Activated CD4-positive, alpha-beta T cell treated with anti-CD3 and anti-CD28 coated beads, Interleukin-2, amount 10 ng/mL, durations not matched to agents 24 days and 14 days (primary cell): ENCODE measurements at regions of chr13 and their contacts with region 1.

Region 1: GRCh38 chr13:44435142-44435982 is 61.7 kb downstream of the SERP2 start:
- DNase-seq: peak; percentile 91
- H3K4me3 Mint-ChIP-seq: peak overlapping the region; percentile 76
- H3K27ac Mint-ChIP-seq: peak overlapping the region; percentile 30
- H3K4me1 Mint-ChIP-seq: peaks cover 17% of the 10 kb centered on the region
- H3K27me3 Mint-ChIP-seq: peaks cover 61% of the 10 kb centered on the region

Region 2: GRCh38 chr13:43905435-43906031 is 529.8 kb before region 1 on chr13:
- intact Hi-C with region 1: loop called (anchors 1 kb)
- DNase-seq: peak; percentile 80
- H3K4me3 Mint-ChIP-seq: no peak overlapping the region
- H3K27ac Mint-ChIP-seq: no peak overlapping the region
- H3K4me1 Mint-ChIP-seq: no peaks in the 10 kb centered on the region
- H3K27me3 Mint-ChIP-seq: peaks cover 36% of the 10 kb centered on the region

Region 3: DNA sequence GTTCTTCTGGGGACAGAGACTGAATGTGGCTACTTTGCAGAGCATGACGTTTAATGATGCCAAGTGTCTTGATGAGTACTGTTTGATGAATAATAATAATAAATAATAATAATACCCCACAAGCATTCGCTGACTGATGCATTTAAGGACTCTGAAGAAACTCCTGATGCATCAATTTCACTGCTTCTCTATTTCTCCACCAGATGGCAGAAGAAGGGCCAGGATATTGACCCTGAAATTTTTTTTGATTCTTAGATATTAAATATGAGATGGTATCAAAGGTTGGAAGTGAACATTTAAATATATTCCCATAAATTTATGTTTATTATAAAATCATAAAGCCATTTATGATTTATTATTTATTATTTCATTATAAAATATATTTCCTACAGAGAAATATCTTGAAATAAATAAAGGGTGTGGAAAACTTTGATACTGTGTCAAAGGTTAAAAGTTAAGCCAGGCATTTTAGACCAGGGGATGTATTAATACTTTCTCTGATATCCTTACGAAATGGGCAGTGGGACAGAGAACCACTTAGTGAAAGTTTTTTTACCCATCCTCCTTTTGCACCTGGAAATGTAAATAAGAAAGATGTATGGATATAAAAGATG is 384.8 kb before region 1 on chr13:
- intact Hi-C with region 1: loop called (anchors 1 kb)
- DNase-seq: no peak
- H3K4me3 Mint-ChIP-seq: no peak overlapping the region
- H3K27ac Mint-ChIP-seq: no peak overlapping the region
- H3K4me1 Mint-ChIP-seq: peaks cover 3% of the 10 kb centered on the region
- H3K27me3 Mint-ChIP-seq: peaks cover 36% of the 10 kb centered on the region

Region 4: DNA sequence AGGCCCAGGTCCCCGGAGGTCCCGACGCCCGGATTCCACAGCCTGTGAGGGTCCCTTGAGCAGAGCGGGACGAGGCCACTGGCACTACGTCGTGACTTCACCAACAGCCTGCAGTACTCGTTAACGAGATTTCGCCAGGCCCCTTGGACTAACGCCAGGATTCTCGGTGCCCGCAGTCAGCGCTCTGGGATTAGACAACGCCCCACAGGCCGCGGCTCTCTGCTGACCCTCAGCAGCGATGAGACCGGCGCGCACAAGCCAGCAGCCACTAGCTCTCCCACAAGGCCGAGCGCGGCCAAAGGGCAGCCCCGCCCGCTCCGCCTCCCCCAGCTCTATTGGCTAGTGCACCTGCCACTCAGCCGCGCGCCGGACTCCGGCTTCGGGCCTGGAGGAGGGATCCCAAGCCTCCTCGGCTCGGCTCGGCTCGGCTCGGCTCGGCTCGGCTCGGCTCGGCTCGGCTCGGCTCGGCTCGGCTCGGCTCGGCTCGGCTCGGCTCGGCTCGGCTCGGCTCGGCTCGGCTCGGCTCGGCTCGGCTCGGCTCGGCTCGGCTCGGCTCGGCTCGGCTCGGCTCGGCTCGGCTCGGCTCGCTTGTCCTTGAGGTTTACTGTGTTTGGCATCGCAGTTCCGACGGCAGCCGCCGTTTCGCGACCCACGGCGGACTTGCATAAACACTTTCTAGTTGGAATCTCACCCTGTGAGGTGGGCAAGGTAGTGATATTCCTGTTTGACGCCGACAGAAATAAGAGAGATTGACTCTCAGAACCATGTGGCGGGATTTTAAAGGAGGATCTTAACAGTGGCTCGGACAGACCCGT is 293.4 kb before region 1 on chr13:
- intact Hi-C with region 1: loop called (anchors 2 kb)
- DNase-seq: peak; percentile 99
- H3K4me3 Mint-ChIP-seq: peak overlapping the region; percentile 87
- H3K27ac Mint-ChIP-seq: peak overlapping the region; percentile 83
- H3K4me1 Mint-ChIP-seq: peaks cover 16% of the 10 kb centered on the region
- H3K27me3 Mint-ChIP-seq: peaks cover 30% of the 10 kb centered on the region

Region 5: GRCh38 chr13:44191504-44192171 is 243.7 kb before region 1 on chr13:
- intact Hi-C with region 1: loop called (anchors 1 kb)
- DNase-seq: peak; percentile 78
- H3K4me3 Mint-ChIP-seq: no peak overlapping the region
- H3K27ac Mint-ChIP-seq: no peak overlapping the region
- H3K4me1 Mint-ChIP-seq: peaks cover 20% of the 10 kb centered on the region
- H3K27me3 Mint-ChIP-seq: peaks cover 59% of the 10 kb centered on the region

Region 6: DNA sequence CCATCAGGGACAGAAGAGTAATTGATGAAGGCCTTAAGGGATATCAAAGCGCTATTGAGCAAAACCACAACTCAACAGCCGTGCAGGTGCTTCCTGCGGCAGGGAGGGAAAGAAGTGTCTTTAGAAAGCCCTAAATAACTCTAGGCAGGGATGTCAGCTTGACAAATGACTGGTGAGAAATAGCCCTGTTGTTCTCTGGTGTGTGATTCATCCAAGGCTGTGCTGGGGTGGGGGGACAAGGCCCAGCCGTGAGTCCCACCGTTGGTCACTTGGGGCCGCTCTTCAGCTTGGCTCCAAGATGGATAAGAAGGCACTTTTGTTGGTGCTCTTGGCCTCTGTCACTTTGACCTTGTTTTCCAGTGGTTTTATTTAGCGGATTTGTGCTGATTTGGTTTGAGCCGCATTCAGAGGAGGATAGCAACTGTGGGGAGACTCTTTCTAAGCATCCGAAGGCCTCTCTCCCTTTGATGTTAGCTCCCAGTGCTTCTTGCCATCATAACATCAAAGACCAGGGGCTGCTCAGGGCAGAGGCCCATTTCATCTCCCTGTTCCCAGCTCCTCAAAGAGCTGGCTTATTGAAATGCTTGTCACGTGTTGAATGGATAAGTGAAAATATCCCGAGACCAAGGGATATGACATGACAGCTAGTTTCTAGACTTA is 192.0 kb before region 1 on chr13:
- intact Hi-C with region 1: loop called (anchors 1 kb)
- DNase-seq: peak; percentile 74
- H3K4me3 Mint-ChIP-seq: no peak overlapping the region
- H3K27ac Mint-ChIP-seq: no peak overlapping the region
- H3K4me1 Mint-ChIP-seq: peaks cover 10% of the 10 kb centered on the region
- H3K27me3 Mint-ChIP-seq: peaks cover 23% of the 10 kb centered on the region

Region 7: GRCh38 chr13:44410346-44410859 is 25.0 kb before region 1 on chr13:
- intact Hi-C with region 1: no loop called
- DNase-seq: no peak
- H3K4me3 Mint-ChIP-seq: no peak overlapping the region
- H3K27ac Mint-ChIP-seq: no peak overlapping the region
- H3K4me1 Mint-ChIP-seq: no peaks in the 10 kb centered on the region
- H3K27me3 Mint-ChIP-seq: peaks cover 2% of the 10 kb centered on the region